Spleen (tissue), 13 donors: ENCODE measurements at regions of chr7 and their contacts with region 1.

Region 1: DNA sequence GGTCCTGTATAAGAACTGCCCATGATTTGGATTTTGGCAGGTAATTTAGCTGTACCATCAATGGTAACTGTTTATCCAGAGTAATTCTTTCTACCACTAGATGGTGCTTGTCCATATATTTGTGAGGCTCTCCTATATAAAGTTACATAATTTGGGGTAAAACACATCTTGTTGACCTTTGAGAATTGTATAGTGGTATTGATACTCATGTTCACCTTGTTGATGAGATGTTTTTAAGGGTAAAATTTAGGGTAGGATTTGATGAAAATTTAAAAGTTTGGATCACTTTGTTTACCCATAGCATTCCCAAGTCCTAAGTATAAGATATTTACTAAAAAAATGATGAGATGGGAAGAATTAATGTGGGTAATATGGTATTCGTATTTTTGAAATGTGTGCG is 31.6 kb downstream of the ST7 start:
- DNase-seq: no peak
- H3K4me3 ChIP-seq: no peak overlapping the region
- H3K27ac ChIP-seq: no peak overlapping the region
- H3K4me1 ChIP-seq: peaks cover 0 to 9% (median 0%) of the 10 kb centered on the region in 6 donors
- H3K27me3 ChIP-seq: no peaks in the 10 kb centered on the region
- CTCF ChIP-seq: peak in 10 of 11 experiments; percentile 8 to 68 (median 60)
- POLR2A ChIP-seq: no peak

Region 2: GRCh38 chr7:117119192-117119924 is 134.4 kb after region 1 on chr7:
- intact Hi-C with region 1: loop called (anchors 5 kb)
- DNase-seq: peak; percentile 82
- H3K4me3 ChIP-seq: no peak overlapping the region
- H3K27ac ChIP-seq: no peak overlapping the region
- H3K4me1 ChIP-seq: peaks cover 0 to 16% (median 9%) of the 10 kb centered on the region in 6 donors
- H3K27me3 ChIP-seq: no peaks in the 10 kb centered on the region
- CTCF ChIP-seq: peak; percentile 25 to 84 (median 71)
- POLR2A ChIP-seq: no peak